ENCODE measurements at regions of chr10 and their contacts with region 1.

Region 1: GRCh38 chr10:88676283-88677060 is 12.2 kb downstream of the LIPF start:
- DNase-seq: no peak
- ATAC-seq: no peak
- H3K4me3 Mint-ChIP-seq: no peak overlapping the region
- H3K27ac Mint-ChIP-seq: no peak overlapping the region
- H3K4me1 Mint-ChIP-seq: no peaks in the 10 kb centered on the region
- H3K27me3 Mint-ChIP-seq: peaks cover 11% of the 10 kb centered on the region

Region 2: DNA sequence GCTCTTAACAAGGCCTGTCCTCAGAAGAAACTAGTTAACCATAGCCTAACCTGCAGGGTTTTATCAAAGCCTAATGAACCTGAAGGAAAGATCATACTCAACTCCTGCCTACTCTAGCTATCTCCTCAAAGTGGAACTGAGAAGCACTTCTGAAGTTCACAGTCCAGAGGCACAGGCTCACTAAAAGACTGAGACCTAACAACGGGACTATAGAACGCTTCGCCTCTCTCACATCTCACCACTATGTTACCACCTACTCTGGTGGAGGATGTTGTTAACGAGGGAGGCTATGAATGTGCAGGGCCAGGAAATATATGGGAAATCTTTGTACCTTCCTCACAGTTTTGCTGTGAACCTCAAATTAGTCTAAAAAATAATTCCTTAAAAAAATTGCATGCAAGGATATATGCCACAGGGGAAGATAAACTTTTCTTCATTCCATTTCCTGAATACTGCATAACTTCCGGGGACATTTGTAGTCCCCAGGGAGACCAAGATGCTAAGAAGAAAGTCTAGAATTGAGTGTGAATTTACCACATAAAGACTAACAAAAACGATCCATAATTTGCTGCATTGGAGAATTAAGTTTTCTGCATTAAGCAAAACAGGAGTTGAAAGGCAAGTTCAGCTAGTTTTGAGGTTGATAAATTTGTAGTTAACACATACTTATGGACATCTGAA is 68.3 kb before region 1 on chr10:
- CTCF ChIA-PET with region 1: no interaction called
- POLR2A ChIA-PET with region 1: no interaction called
- DNase-seq: no peak
- ATAC-seq: no peak
- H3K4me3 Mint-ChIP-seq: no peak overlapping the region
- H3K27ac Mint-ChIP-seq: no peak overlapping the region
- H3K4me1 Mint-ChIP-seq: no peaks in the 10 kb centered on the region
- H3K27me3 Mint-ChIP-seq: peaks cover 22% of the 10 kb centered on the region

Region 3: DNA sequence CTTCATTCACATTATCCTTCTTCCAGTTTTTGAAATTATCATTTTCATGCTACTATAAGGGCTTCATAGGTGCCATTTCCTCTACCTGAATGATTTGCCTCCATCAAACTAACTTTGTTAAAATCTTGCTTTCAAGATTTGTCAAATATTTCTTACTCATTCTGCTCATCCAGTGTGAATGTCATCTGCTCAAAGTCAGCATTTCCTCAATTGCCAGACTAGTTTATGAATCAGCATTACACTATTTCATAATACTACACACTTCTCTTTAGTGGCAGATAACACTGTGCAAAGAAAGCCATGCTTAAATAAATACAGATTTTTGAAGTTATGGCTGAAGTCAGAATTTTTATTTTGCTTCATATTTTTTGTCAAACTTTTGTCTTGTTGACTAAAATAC is 33.5 kb before region 1 on chr10:
- CTCF ChIA-PET with region 1: no interaction called
- POLR2A ChIA-PET with region 1: no interaction called
- DNase-seq: no peak
- ATAC-seq: no peak
- H3K4me3 Mint-ChIP-seq: no peak overlapping the region
- H3K27ac Mint-ChIP-seq: no peak overlapping the region
- H3K4me1 Mint-ChIP-seq: no peaks in the 10 kb centered on the region
- H3K27me3 Mint-ChIP-seq: peaks cover 14% of the 10 kb centered on the region

Region 4: GRCh38 chr10:88687853-88688467 is 11.5 kb after region 1 on chr10:
- CTCF ChIA-PET with region 1: interaction called, 21 read pairs
- POLR2A ChIA-PET with region 1: no interaction called
- DNase-seq: no peak
- ATAC-seq: no peak
- H3K4me3 Mint-ChIP-seq: no peak overlapping the region
- H3K27ac Mint-ChIP-seq: no peak overlapping the region
- H3K4me1 Mint-ChIP-seq: no peaks in the 10 kb centered on the region
- H3K27me3 Mint-ChIP-seq: peaks cover 9% of the 10 kb centered on the region